ENCODE measurements at regions of chr2 and their contacts with region 1.

Region 1: DNA sequence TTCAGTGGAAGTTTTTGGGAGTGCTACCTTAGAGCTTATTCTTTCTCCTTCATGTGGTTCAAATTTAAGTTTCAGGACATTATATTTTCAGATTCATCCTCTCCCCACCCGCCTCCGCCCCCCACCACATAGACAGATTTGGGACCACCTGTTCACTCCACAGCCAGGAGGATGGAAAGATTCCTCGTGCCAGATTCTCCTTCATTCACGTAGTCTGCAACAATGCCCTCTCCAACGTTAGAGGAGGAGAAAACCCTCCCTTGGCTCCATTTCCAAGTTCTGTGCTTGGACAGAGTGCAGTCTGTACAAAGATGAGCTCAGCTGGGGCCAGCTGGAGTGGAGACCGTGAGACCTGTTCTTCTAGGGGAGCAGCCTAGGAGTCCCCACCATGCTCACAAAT is 26.2 kb downstream of the POU3F3 start:
- DNase-seq: no peak

Region 2: GRCh38 chr2:104332743-104333142 is 547.3 kb before region 1 on chr2:
- intact Hi-C with region 1: no loop called
- DNase-seq: no peak

Region 3: DNA sequence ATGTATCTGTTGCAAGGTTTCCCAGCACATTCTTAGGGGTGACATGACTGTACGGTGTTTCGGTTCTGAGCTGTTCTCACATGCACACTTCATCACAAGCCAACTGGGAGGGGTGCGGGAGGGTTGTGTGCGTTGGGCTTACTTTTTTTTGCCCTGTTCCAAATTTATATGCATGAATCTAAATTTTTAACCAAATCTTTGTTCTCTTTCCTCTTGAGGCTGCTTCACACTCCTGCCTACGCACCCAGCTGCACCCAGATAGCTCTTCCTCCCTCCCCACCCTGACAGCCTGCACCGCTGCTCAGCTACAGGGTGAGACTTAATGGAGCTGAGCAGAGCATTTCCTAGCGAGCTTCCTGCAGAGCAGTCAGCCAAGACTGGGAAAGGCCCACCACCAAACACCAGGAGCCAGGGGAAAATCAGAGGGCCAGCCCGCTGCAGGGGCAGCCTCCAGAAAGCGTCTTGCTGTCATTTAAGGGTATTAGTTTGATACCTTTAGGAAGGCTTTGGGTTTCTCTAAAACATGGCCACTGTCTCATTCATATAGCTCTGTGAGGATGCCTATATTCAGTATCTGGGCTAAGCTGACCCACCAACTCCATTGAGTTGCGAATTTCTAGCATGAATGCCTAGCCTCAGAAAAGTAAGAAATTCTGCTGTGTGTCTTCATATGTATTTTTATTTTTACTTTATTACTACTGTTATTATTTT is 58.3 kb after region 1 on chr2:
- intact Hi-C with region 1: loop called (anchors 5 kb)
- DNase-seq: peak in 8 of 10 donors; percentile 25 to 94 (median 67)